Colonic mucosa (tissue), 4 donors: ENCODE measurements at regions of chr5 and their contacts with region 1.

Region 1: GRCh38 chr5:61055434-61056006 is 106.7 kb downstream of the SMIM15 start:
- DNase-seq: no peak
- H3K4me3 ChIP-seq: no peak overlapping the region
- H3K27ac ChIP-seq: no peak overlapping the region
- H3K4me1 ChIP-seq: no peaks in the 10 kb centered on the region
- H3K27me3 ChIP-seq: no peaks in the 10 kb centered on the region
- CTCF ChIP-seq: peak; percentile 51

Region 2: GRCh38 chr5:61141801-61142200 is 86.3 kb after region 1 on chr5:
- intact Hi-C with region 1: loop called (anchors 5 kb)
- DNase-seq: no peak
- H3K4me3 ChIP-seq: no peak overlapping the region
- H3K27ac ChIP-seq: no peak overlapping the region
- H3K4me1 ChIP-seq: no peaks in the 10 kb centered on the region
- H3K27me3 ChIP-seq: no peaks in the 10 kb centered on the region
- CTCF ChIP-seq: no peak